CD8-positive, alpha-beta memory T cell (primary cell): ENCODE measurements at regions of chr1 and their contacts with region 1.

Region 1: GRCh38 chr1:30743584-30744059 is 14.0 kb downstream of the LAPTM5 start:
- DNase-seq: peak; percentile 62 to 89 (median 84)
- H3K4me3 ChIP-seq: peak overlapping the region; percentile 61
- H3K4me3 Mint-ChIP-seq: peak overlapping the region; percentile 80 to 88 (median 84)
- H3K27ac ChIP-seq: peak overlapping the region; percentile 69
- H3K27ac Mint-ChIP-seq: peak overlapping the region; percentile 93 to 100 (median 100)
- H3K4me1 ChIP-seq: peaks cover 87% of the 10 kb centered on the region
- H3K4me1 Mint-ChIP-seq: peaks cover 94 to 100% (median 99%) of the 10 kb centered on the region in 3 donors
- H3K27me3 ChIP-seq: no peaks in the 10 kb centered on the region
- H3K27me3 Mint-ChIP-seq: peaks cover 0 to 3% of the 10 kb centered on the region in 2 donors

Region 2: GRCh38 chr1:30111431-30111830 is 632.2 kb before region 1 on chr1:
- CTCF ChIA-PET with region 1: no interaction called
- POLR2A ChIA-PET with region 1: no interaction called
- DNase-seq: no peak
- H3K4me3 ChIP-seq: no peak overlapping the region
- H3K4me3 Mint-ChIP-seq: no peak overlapping the region
- H3K27ac ChIP-seq: no peak overlapping the region
- H3K27ac Mint-ChIP-seq: no peak overlapping the region
- H3K4me1 ChIP-seq: no peaks in the 10 kb centered on the region
- H3K4me1 Mint-ChIP-seq: no peaks in the 10 kb centered on the region
- H3K27me3 ChIP-seq: peaks cover 3% of the 10 kb centered on the region
- H3K27me3 Mint-ChIP-seq: peaks cover 22 to 65% of the 10 kb centered on the region in 2 donors

Region 3: DNA sequence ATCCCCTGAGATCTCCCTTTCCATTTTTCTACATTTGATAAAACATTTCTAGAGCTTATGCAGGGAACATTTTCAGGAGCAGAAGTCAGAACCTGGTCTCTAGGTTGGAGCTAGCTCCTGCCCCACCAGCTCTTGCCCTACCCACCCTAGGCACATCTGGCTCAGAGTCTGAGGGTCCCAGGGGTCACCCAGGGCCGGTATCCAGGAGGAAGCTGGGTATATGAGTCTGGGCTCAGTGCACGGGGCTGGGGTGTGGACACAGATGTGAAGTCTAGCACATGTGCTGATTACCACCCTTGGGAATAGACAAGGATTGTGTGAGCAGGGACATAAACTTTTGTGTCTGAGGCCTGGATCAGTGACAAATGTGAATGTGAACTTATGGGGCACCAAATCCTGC is 115.6 kb before region 1 on chr1:
- CTCF ChIA-PET with region 1: no interaction called
- POLR2A ChIA-PET with region 1: no interaction called
- DNase-seq: no peak
- H3K4me3 ChIP-seq: no peak overlapping the region
- H3K4me3 Mint-ChIP-seq: no peak overlapping the region
- H3K27ac ChIP-seq: no peak overlapping the region
- H3K27ac Mint-ChIP-seq: no peak overlapping the region
- H3K4me1 ChIP-seq: no peaks in the 10 kb centered on the region
- H3K4me1 Mint-ChIP-seq: no peaks in the 10 kb centered on the region
- H3K27me3 ChIP-seq: peaks cover 8% of the 10 kb centered on the region
- H3K27me3 Mint-ChIP-seq: peaks cover 19 to 52% of the 10 kb centered on the region in 2 donors

Region 4: DNA sequence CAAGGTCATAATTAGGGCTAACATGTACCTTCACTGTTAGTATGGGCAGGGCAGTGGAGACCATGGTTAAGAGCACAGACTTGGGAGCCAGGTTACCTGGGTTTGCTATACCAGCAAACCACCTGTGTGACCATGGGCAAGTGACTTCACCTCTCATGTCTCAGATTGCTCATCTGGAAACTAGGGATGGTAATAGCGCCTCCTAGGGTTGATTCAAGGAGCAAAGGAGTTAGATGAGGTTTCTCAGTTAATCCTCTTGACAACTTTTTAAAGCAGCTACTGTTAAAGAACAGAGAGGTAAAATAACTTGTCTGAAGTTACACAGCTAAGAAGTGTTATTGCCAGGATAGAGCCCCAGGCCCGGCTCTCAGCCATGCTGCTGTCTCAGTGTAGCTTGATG is 19.4 kb before region 1 on chr1:
- CTCF ChIA-PET with region 1: interaction called, 76 read pairs
- POLR2A ChIA-PET with region 1: interaction called, 25 read pairs
- DNase-seq: no peak
- H3K4me3 ChIP-seq: no peak overlapping the region
- H3K4me3 Mint-ChIP-seq: no peak overlapping the region
- H3K27ac ChIP-seq: no peak overlapping the region
- H3K27ac Mint-ChIP-seq: peak overlapping the region in 3 of 8 donors; percentile 51 to 61 (median 56)
- H3K4me1 ChIP-seq: peaks cover 25% of the 10 kb centered on the region
- H3K4me1 Mint-ChIP-seq: peaks cover 19 to 57% (median 28%) of the 10 kb centered on the region in 3 donors
- H3K27me3 ChIP-seq: no peaks in the 10 kb centered on the region
- H3K27me3 Mint-ChIP-seq: no peaks in the 10 kb centered on the region

Region 5: DNA sequence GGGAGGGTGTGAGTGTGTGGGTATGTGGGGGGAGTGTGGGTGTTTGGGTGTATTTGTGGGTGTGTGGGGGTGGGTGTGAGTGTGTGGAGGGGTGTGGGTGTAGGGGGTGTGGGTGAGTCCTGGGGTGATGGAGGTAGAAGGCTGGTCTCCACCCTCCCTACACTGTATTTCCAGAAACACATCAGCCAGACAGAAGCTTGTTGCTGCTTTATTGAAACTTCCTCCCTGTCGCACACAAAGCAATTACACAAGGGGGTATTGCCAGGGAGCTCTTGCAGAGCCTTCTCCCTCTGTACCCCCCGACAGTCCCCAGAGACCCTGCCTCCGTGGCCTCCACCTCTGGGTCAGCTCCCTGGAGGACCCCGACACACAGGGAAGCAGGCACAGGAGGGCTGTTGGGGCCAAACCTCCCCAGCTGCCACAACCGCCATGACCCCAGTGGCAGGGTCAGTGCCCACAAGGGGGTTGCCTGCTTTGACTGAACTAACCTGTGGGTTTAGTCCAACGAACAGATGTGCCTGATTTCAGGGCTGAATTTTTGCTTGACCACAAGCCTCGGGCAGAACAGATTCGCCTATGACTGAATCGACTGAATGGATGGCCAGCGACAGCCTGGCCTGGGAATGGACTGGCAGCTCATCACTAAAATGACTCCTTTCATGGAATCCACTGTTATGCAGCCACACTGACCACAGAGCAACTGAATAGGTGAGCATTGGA is 11.2 kb before region 1 on chr1:
- CTCF ChIA-PET with region 1: interaction called, 9 read pairs
- POLR2A ChIA-PET with region 1: interaction called, 23 read pairs
- DNase-seq: no peak
- H3K4me3 ChIP-seq: no peak overlapping the region
- H3K4me3 Mint-ChIP-seq: no peak overlapping the region
- H3K27ac ChIP-seq: no peak overlapping the region
- H3K27ac Mint-ChIP-seq: peak overlapping the region in 6 of 8 donors; percentile 61 to 84 (median 68)
- H3K4me1 ChIP-seq: peaks cover 23% of the 10 kb centered on the region
- H3K4me1 Mint-ChIP-seq: peaks cover 16 to 43% (median 22%) of the 10 kb centered on the region in 3 donors
- H3K27me3 ChIP-seq: no peaks in the 10 kb centered on the region
- H3K27me3 Mint-ChIP-seq: no peaks in the 10 kb centered on the region

Region 6: DNA sequence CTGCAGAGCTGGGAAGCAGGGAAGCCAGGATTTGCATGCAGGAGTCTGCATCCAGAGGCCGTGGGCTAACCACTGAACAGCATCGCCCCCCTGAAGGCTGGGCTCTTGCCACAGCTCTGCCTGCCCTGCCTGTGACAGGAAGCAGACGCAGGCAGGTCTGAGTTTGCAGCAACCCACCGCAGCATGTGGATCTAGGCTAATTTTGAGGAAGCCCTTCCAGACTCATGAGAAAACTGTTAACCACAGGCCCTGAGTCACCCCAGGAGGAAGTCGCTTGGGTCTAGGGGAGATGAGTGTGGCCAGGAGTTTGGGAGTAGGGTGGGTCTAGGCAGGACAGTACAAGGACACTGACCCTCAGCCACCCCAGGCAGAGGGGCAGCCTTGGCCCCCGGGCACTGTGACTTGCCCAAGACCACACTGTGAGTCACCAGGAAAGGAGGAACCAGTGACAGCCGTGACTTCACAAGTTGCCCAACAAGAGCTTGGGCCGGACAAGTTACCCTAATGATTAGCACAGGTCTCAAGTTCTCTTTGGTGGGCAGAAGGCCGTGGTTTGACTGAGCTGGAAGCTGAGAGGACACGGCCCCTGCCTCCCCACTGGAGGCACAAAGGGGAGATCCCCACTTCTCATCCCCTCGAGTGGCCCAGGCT is 13.0 kb after region 1 on chr1:
- CTCF ChIA-PET with region 1: interaction called, 67 read pairs
- POLR2A ChIA-PET with region 1: interaction called, 189 read pairs
- DNase-seq: peak; percentile 70 to 90 (median 78)
- H3K4me3 ChIP-seq: peak overlapping the region; percentile 74
- H3K4me3 Mint-ChIP-seq: peak overlapping the region; percentile 96 to 100 (median 99)
- H3K27ac ChIP-seq: peak overlapping the region; percentile 96
- H3K27ac Mint-ChIP-seq: peak overlapping the region; percentile 98 to 100 (median 100)
- H3K4me1 ChIP-seq: peaks cover 75% of the 10 kb centered on the region
- H3K4me1 Mint-ChIP-seq: peaks cover 85 to 90% (median 86%) of the 10 kb centered on the region in 3 donors
- H3K27me3 ChIP-seq: no peaks in the 10 kb centered on the region
- H3K27me3 Mint-ChIP-seq: peaks cover 0 to 2% of the 10 kb centered on the region in 2 donors

Region 7: GRCh38 chr1:30779294-30780071 is 35.9 kb after region 1 on chr1:
- CTCF ChIA-PET with region 1: interaction called, 47 read pairs
- POLR2A ChIA-PET with region 1: interaction called, 4 read pairs
- DNase-seq: peak; percentile 82 to 93 (median 91)
- H3K4me3 ChIP-seq: peak overlapping the region; percentile 33
- H3K4me3 Mint-ChIP-seq: peak overlapping the region in 5 of 7 donors; percentile 19 to 49 (median 23)
- H3K27ac ChIP-seq: peak overlapping the region; percentile 78
- H3K27ac Mint-ChIP-seq: peak overlapping the region in 7 of 8 donors; percentile 3 to 81 (median 36)
- H3K4me1 ChIP-seq: peaks cover 19% of the 10 kb centered on the region
- H3K4me1 Mint-ChIP-seq: peaks cover 15 to 29% (median 18%) of the 10 kb centered on the region in 3 donors
- H3K27me3 ChIP-seq: no peaks in the 10 kb centered on the region
- H3K27me3 Mint-ChIP-seq: no peaks in the 10 kb centered on the region

Region 8: DNA sequence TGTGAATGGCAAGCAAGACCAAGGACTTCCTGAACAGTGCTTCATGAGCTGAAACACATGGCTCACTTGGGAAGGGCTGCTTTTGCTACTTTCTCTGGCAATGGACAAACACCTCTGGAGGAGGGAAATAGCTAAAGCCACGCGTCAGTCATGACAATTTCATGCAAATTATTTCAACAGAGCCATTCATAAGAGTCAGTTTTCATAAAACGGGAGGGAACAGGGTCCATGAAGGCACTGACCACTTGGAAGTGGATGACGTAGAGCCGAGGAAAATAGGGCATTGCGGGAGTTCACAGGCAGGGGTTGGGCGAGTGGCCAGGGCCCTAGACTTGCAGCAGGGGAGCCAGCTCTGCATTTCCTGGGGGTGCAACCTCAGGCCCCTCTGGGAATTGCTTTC is 121.1 kb after region 1 on chr1:
- CTCF ChIA-PET with region 1: no interaction called
- POLR2A ChIA-PET with region 1: no interaction called
- DNase-seq: no peak
- H3K4me3 ChIP-seq: no peak overlapping the region
- H3K4me3 Mint-ChIP-seq: no peak overlapping the region
- H3K27ac ChIP-seq: no peak overlapping the region
- H3K27ac Mint-ChIP-seq: no peak overlapping the region
- H3K4me1 ChIP-seq: peaks cover 5% of the 10 kb centered on the region
- H3K4me1 Mint-ChIP-seq: peaks cover 5 to 10% (median 6%) of the 10 kb centered on the region in 3 donors
- H3K27me3 ChIP-seq: no peaks in the 10 kb centered on the region
- H3K27me3 Mint-ChIP-seq: peaks cover 26 to 54% of the 10 kb centered on the region in 2 donors